ENCODE measurements at regions of chr1 and their contacts with region 1.

Region 1: GRCh38 chr1:186212544-186213226 is 162.4 kb downstream of the TPR start:
- DNase-seq: peak in 2 of 10 donors; percentile 7 to 35
- H3K4me3 ChIP-seq: no peak overlapping the region
- H3K27ac ChIP-seq: no peak overlapping the region
- H3K27me3 ChIP-seq: peaks cover 0 to 10% (median 0%) of the 10 kb centered on the region in 45 donors
- CTCF ChIP-seq: peak in 55 of 56 donors; percentile 47 to 90 (median 76)

Region 2: GRCh38 chr1:185581961-185582725 is 630.5 kb before region 1 on chr1:
- intact Hi-C with region 1: no loop called
- DNase-seq: no peak
- H3K4me3 ChIP-seq: no peak overlapping the region
- H3K27ac ChIP-seq: no peak overlapping the region
- H3K27me3 ChIP-seq: peaks cover 0 to 6% (median 0%) of the 10 kb centered on the region in 45 donors
- CTCF ChIP-seq: no peak

Region 3: DNA sequence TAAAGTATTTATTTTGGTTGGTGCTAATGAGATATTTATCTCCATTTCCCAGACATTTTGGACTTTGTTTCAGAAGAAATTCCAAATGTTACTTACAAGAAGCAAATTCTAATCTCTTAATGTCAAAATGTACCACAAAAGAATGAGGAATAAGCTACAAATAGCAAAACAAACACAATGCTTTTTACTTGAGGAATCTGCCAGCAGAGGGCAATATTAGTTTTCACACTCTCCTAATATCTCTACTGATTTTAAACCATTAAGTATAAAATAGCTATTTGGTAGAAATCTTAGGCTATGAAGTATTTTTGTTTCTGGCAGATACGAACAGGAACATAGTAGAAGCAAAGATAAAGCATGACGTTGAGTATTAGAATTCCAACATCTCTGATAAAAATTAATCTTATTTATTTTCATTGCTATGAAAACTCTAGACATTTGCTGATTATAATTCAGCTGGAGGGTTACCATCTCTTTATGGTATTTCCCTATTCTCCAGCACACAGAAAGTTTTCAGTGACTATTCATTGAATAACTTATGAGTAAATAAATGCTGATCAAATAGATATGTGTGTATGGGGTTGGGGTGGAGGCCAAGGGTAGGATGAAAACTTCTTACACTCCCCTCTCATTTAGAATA is 491.9 kb before region 1 on chr1:
- intact Hi-C with region 1: loop called in 1 of 2 experiments (anchors 5 kb)
- DNase-seq: no peak
- H3K4me3 ChIP-seq: no peak overlapping the region
- H3K27ac ChIP-seq: no peak overlapping the region
- H3K27me3 ChIP-seq: no peaks in the 10 kb centered on the region
- CTCF ChIP-seq: peak; percentile 32 to 81 (median 60)

Region 4: DNA sequence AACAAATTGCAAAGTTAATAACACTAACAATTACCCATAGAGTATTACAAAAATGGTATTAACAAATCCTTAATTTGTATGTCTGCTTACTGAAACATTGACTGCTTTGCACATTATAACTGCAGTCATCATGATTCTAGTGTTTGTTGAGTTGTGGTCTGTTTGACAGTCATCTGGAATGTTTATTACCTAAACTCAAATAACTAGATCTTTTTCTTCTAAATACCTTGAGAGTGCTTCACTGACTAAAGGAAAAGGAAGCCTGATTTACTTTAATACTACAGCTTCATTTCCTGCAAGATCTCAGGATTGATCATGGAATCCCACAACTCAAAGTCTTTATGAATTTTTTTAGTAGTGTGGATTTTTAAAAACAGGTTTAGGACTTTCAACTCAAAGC is 408.5 kb before region 1 on chr1:
- intact Hi-C with region 1: loop called in 1 of 2 experiments (anchors 10 kb)
- DNase-seq: no peak
- H3K4me3 ChIP-seq: no peak overlapping the region
- H3K27ac ChIP-seq: no peak overlapping the region
- H3K27me3 ChIP-seq: peaks cover 0 to 5% (median 0%) of the 10 kb centered on the region in 45 donors
- CTCF ChIP-seq: no peak

Region 5: GRCh38 chr1:185813401-185813979 is 399.2 kb before region 1 on chr1:
- intact Hi-C with region 1: loop called (anchors 2 to 10 kb)
- DNase-seq: no peak
- H3K4me3 ChIP-seq: no peak overlapping the region
- H3K27ac ChIP-seq: no peak overlapping the region
- H3K27me3 ChIP-seq: peaks cover 0 to 5% (median 0%) of the 10 kb centered on the region in 45 donors
- CTCF ChIP-seq: peak; percentile 26 to 69 (median 53)

Region 6: GRCh38 chr1:186129758-186130157 is 82.9 kb before region 1 on chr1:
- intact Hi-C with region 1: no loop called
- DNase-seq: no peak
- H3K4me3 ChIP-seq: no peak overlapping the region
- H3K27ac ChIP-seq: no peak overlapping the region
- H3K27me3 ChIP-seq: no peaks in the 10 kb centered on the region
- CTCF ChIP-seq: no peak